ENCODE measurements at regions of chr5 and their contacts with region 1.

Region 1: GRCh38 chr5:94618493-94619328 is at the starts of genes KIAA0825 and SLF1:
- DNase-seq: peak; percentile 85 to 91 (median 86)
- H3K4me3 ChIP-seq: peak within 1 kb of the TSS; percentile 25 to 67
- H3K4me3 Mint-ChIP-seq: peak within 1 kb of the TSS; percentile 89 to 98 (median 94)
- H3K27ac ChIP-seq: peak within 1 kb of the TSS; percentile 57
- H3K27ac Mint-ChIP-seq: peak within 1 kb of the TSS; percentile 86 to 96 (median 90)
- H3K4me1 ChIP-seq: peaks cover 48% of the 10 kb centered on the region
- H3K4me1 Mint-ChIP-seq: peaks cover 25 to 50% (median 41%) of the 10 kb centered on the region in 4 donors
- H3K27me3 ChIP-seq: no peaks in the 10 kb centered on the region
- H3K27me3 Mint-ChIP-seq: no peaks in the 10 kb centered on the region
- total RNA-seq, gene KIAA0825: 2.1 to 2.2 TPM
- total RNA-seq, gene SLF1: 14.3 to 16.5 TPM

Region 2: DNA sequence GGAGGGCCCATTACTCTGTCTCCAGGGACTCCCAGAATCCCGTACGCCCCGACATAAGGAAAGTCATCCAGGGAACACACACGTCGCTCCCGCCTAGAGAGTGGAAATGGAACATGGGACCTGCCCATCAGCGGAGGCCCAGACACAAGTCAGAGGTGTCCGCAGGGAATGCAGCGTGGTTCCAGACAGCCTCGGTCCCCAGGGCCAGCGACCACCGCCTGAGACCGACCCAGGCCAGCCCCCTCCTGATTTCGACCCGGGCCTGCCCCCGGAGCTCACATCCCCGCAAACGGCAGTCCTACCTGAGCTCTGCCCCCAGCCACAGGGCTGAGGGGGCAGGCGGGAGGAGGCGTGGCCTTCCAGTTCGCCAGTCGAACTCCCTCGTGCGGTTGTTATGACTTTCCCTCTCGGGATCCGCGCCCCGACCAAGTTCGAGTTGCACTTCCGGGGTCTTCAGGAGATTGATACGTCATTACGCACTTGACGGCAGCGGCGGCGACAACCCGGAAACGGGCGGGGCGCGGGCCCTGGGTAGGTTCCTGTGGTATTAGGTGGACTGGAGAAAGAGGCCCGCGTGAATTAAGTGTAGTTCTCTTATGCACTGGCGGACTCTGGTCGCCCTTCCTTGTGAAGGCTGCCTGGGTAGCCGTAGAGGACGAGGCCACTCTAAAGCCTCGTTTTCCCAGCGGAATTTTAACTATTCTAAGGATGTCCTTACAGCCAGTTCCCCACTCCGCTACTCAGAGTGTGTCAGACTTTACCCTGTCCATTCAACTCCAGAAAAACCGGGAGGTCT is 507.3 kb before region 1 on chr5:
- CTCF ChIA-PET with region 1: no interaction called
- POLR2A ChIA-PET with region 1: no interaction called
- intact Hi-C with region 1: loop called (anchors 1 kb)
- DNase-seq: peak; percentile 88 to 94 (median 91)
- H3K4me3 ChIP-seq: peak overlapping the region; percentile 55 to 96
- H3K4me3 Mint-ChIP-seq: peak overlapping the region; percentile 94 to 97 (median 95)
- H3K27ac ChIP-seq: peak overlapping the region; percentile 77
- H3K27ac Mint-ChIP-seq: peak overlapping the region; percentile 93 to 97 (median 96)
- H3K4me1 ChIP-seq: peaks cover 26% of the 10 kb centered on the region
- H3K4me1 Mint-ChIP-seq: peaks cover 31 to 52% (median 41%) of the 10 kb centered on the region in 4 donors
- H3K27me3 ChIP-seq: no peaks in the 10 kb centered on the region
- H3K27me3 Mint-ChIP-seq: peaks cover 0 to 8% of the 10 kb centered on the region in 2 donors

Region 3: GRCh38 chr5:94524841-94525697 is 93.6 kb before region 1 on chr5:
- CTCF ChIA-PET with region 1: interaction called, 4 read pairs
- POLR2A ChIA-PET with region 1: no interaction called
- intact Hi-C with region 1: loop called (anchors 2 kb)
- DNase-seq: peak in 4 of 5 donors; percentile 43 to 54 (median 48)
- H3K4me3 ChIP-seq: no peak overlapping the region
- H3K4me3 Mint-ChIP-seq: no peak overlapping the region
- H3K27ac ChIP-seq: no peak overlapping the region
- H3K27ac Mint-ChIP-seq: no peak overlapping the region
- H3K4me1 ChIP-seq: no peaks in the 10 kb centered on the region
- H3K4me1 Mint-ChIP-seq: peaks cover 0 to 2% (median 0%) of the 10 kb centered on the region in 4 donors
- H3K27me3 ChIP-seq: no peaks in the 10 kb centered on the region
- H3K27me3 Mint-ChIP-seq: no peaks in the 10 kb centered on the region

Region 4: DNA sequence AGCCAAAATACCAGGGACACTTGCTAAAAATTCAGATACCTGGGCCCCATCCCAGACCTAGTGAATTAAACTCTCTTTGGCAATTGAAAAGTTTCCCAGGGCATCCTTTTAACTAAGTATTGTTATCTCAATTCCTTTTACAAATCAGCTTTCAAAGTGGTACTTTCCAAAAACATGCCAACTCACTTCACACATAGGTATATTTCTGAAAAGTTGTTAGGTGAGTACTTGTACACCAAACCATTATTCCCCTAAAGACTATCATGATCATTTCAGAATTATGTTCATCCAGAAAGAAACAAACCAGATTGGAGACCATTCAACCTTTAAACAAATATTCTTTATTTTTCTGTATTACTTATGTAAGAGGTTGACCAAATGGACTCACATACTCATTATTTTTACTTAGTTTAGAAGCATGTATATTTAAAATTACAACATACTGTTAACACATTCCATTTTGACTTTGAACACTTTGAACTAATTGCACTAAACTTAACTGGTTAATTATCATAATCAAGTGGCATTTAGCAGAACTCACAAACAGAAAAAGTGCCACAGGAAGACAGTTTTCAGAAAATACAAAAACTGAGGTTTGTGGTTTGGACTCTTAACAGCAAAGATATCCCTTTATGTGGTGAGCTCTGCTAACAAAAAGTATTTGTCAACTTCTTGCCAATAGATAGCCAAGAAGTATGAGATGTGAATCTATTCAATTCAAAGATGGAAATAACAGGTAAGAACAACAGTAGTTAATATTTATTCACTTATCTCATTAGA is 41.1 kb before region 1 on chr5:
- CTCF ChIA-PET with region 1: interaction called, 6 read pairs
- POLR2A ChIA-PET with region 1: interaction called, 7 read pairs
- intact Hi-C with region 1: loop called (anchors 1 kb)
- DNase-seq: peak; percentile 42 to 75 (median 61)
- H3K4me3 ChIP-seq: peak overlapping the region in 1 of 2 donors; percentile 14
- H3K4me3 Mint-ChIP-seq: peak overlapping the region; percentile 14 to 74 (median 68)
- H3K27ac ChIP-seq: no peak overlapping the region
- H3K27ac Mint-ChIP-seq: peak overlapping the region in 4 of 7 donors; percentile 32 to 66 (median 46)
- H3K4me1 ChIP-seq: peaks cover 72% of the 10 kb centered on the region
- H3K4me1 Mint-ChIP-seq: peaks cover 36 to 61% (median 55%) of the 10 kb centered on the region in 4 donors
- H3K27me3 ChIP-seq: no peaks in the 10 kb centered on the region
- H3K27me3 Mint-ChIP-seq: no peaks in the 10 kb centered on the region

Region 5: DNA sequence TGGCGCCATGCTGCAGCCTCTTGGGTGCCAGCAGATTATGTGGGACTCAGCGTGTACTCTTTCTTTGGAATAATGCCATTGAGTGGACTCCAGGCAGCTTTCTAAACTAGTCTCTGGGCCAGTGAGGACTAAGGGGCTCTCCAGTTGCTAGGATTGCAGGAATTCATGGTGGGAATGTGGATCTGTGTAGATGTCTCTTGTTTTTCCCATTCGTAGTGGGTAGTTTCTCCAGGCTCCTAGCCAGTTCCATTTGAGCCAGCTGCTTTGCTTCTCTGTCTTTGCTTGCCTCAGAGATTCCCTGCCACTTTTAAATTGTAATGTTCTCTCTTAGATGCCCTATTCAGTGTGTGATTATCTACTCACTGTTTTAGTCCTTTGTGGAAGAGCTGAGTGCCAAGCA is 42.4 kb after region 1 on chr5:
- CTCF ChIA-PET with region 1: no interaction called
- POLR2A ChIA-PET with region 1: no interaction called
- intact Hi-C with region 1: no loop called
- DNase-seq: no peak
- H3K4me3 ChIP-seq: no peak overlapping the region
- H3K4me3 Mint-ChIP-seq: no peak overlapping the region
- H3K27ac ChIP-seq: no peak overlapping the region
- H3K27ac Mint-ChIP-seq: no peak overlapping the region
- H3K4me1 ChIP-seq: no peaks in the 10 kb centered on the region
- H3K4me1 Mint-ChIP-seq: peaks cover 0 to 6% (median 0%) of the 10 kb centered on the region in 4 donors
- H3K27me3 ChIP-seq: no peaks in the 10 kb centered on the region
- H3K27me3 Mint-ChIP-seq: no peaks in the 10 kb centered on the region

Region 6: GRCh38 chr5:95134326-95134725 is 515.6 kb after region 1 on chr5:
- CTCF ChIA-PET with region 1: no interaction called
- POLR2A ChIA-PET with region 1: no interaction called
- intact Hi-C with region 1: no loop called
- DNase-seq: no peak
- H3K4me3 ChIP-seq: no peak overlapping the region
- H3K4me3 Mint-ChIP-seq: no peak overlapping the region
- H3K27ac ChIP-seq: no peak overlapping the region
- H3K27ac Mint-ChIP-seq: no peak overlapping the region
- H3K4me1 ChIP-seq: no peaks in the 10 kb centered on the region
- H3K4me1 Mint-ChIP-seq: no peaks in the 10 kb centered on the region
- H3K27me3 ChIP-seq: no peaks in the 10 kb centered on the region
- H3K27me3 Mint-ChIP-seq: no peaks in the 10 kb centered on the region

Measured in CD4-positive, alpha-beta memory T cell (primary cell).